ENCODE measurements at regions of chr22 and their contacts with region 1.

Region 1: DNA sequence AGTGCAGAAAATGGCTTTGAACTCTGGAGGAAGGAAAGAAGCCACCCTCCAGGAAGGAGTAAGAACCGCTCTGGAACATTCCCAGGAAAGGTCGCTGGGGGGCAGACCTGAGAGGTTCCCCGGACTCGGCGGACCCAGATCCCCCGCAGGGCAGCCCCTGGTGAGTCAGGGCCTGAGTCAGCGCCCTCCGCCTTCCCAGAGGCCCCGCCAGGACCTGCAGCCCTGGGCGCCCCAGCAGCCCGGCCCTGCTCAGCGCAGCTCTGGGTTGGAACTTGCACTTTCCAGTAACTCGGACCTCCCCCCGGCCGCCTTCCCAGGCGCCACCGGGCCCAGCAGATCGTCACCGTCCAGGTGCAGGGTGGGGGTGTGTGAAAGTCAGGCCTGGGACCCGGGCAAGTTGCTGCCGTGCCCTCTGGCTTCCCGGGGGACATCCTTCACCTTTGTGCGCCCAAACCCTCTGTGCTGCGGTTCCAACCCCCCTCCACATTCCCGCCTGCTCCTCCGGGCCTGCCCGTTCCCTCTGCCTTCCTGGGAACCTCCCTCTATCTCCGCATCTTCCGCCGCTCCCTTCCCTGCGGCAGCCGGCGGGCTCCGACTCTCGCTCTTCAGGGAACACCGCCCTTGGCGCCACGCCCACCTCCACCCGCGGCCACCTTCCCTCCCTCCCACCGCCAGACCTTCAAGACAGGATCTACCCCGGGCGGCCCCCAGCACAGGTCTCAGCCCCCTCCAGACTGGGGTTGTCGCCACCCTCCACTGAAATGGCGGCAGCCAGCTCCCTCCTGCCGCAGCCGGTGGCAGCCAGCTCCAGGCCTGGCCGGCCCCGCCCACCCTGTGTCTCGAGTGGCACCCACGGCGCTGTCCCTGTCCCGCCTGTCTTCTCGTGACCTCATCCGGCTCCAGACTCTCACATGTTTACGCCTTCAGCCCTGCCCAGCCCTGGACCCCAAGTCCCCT is 36.8 kb upstream of the WNT7B start:
- DNase-seq: peak; percentile 90
- ATAC-seq: peak; percentile 96
- H3K4me3 ChIP-seq: peak overlapping the region; percentile 71 to 86 (median 77); a peak in 5 of 6 replicates
- H3K27ac ChIP-seq: peak overlapping the region; percentile 71
- H3K4me1 ChIP-seq: peaks cover 41% of the 10 kb centered on the region
- H3K27me3 ChIP-seq: peaks cover 0 to 3% of the 10 kb centered on the region in 2 experiments; a peak in 1 of 5 replicates
- CTCF ChIP-seq: peak; percentile 83
- EP300 ChIP-seq: no peak
- POLR2A ChIP-seq: peak; percentile 67 to 80
- RAD21 ChIP-seq: peak; percentile 86

Region 2: DNA sequence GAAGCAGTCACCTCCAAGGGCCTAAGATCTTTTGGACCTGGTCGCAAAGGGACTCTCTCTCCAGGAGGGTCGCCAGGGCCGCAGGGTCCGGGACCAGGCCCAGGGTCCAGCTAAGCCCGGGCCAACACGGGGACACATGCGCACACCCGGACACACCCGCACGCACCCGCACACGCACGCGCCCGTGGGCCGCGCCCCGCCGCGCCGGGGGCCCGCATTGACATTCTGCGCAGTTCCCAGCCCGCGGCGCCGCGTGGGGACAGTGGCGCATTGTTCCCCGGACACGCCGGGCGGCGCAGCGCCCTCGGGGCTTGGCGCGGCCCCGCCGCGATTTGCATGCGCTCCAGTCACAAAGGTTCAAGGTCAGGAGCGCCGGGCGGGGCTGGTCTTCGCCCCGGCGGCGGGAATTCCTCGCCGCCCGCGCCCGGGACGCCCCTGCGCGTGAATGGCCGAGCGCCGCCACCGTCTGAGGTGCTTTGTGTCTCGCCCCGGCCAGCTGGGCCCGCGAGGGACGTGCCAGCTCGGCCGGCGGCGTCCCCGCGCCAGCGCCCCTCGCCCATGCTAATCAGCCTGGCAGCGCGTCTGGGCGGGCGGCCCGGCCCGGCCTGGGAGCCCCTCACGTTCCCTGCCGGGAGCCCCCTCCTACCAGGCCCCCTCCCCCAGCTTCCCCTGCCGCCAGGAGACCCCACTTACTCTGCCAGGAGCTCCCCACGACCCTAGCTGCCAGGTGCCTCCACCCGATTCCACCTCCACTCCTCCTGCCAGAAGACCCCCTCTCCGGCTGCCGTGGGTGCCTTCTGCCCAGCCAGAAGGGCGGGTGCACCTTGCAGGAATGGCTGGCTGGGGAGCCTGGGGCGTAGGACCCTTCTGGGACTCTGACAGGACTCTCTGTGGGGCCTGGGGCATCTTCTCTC is 13.7 kb after region 1 on chr22:
- CTCF ChIA-PET with region 1: no interaction called
- POLR2A ChIA-PET with region 1: interaction called, 13 read pairs
- in situ Hi-C with region 1: no loop called
- intact Hi-C with region 1: no loop called
- DNase-seq: peak; percentile 46
- ATAC-seq: peak; percentile 70
- H3K4me3 ChIP-seq: peak overlapping the region; percentile 41 to 71 (median 43)
- H3K27ac ChIP-seq: no peak overlapping the region
- H3K4me1 ChIP-seq: peaks cover 52% of the 10 kb centered on the region
- H3K27me3 ChIP-seq: peaks cover 7 to 54% of the 10 kb centered on the region in 2 experiments
- CTCF ChIP-seq: peak; percentile 49; the same call in 1 of the 2 replicates
- EP300 ChIP-seq: peak; percentile 34 to 42; a peak in 1 of 4 replicates
- POLR2A ChIP-seq: no peak
- RAD21 ChIP-seq: peak; percentile 68

Region 3: DNA sequence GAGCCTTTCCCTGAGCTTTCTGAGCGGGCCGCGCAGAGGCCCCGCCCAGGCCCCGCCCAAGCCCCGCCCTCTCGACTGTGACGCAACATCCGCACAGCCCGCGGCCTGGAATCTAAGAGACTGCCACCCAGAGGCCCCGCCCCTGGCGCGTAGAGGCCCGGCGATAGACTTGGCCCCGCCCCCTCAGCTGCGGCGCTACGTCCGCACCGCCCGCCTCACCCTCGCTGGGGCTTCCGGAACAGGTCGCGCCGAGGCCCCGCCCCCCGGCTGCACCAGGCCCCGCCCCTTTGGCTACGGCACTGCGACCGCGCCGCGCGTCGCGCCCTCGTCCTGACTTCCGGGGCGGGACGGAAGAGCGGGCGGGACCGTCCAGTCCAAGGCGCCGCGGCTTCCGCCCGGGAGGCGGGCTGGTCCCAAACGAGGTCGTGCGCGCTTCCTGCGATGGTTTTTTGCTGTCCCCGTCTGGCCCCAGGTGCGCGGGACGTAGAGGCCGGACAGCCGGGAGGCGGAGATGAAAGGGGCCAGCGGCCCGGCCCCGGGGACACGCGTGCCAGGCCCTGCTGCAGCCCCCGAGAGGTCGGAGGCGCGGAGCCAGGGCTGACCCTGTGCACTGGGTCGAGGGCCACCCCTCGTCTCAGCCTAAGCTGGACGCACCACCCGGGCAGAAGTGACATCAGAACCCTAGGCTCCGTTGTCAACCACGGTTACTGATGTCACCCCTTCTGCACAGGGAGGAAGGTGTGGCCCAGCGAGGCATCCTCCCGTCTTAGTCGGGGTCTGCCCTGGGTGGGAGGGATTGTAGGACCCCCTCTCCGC is 22.2 kb after region 1 on chr22:
- CTCF ChIA-PET with region 1: interaction called, 7 read pairs
- POLR2A ChIA-PET with region 1: interaction called, 41 read pairs
- in situ Hi-C with region 1: no loop called
- intact Hi-C with region 1: no loop called
- DNase-seq: peak; percentile 95
- ATAC-seq: peak; percentile 93
- H3K4me3 ChIP-seq: peak overlapping the region; percentile 64 to 85 (median 69)
- H3K27ac ChIP-seq: peak overlapping the region; percentile 69
- H3K4me1 ChIP-seq: peaks cover 39% of the 10 kb centered on the region
- H3K27me3 ChIP-seq: peaks cover 3 to 12% of the 10 kb centered on the region in 2 experiments; a peak in 3 of 5 replicates
- CTCF ChIP-seq: no peak
- EP300 ChIP-seq: peak in 1 of 2 experiments; percentile 7; a peak in 1 of 4 replicates
- POLR2A ChIP-seq: peak; percentile 71 to 86
- RAD21 ChIP-seq: no peak

Region 4: DNA sequence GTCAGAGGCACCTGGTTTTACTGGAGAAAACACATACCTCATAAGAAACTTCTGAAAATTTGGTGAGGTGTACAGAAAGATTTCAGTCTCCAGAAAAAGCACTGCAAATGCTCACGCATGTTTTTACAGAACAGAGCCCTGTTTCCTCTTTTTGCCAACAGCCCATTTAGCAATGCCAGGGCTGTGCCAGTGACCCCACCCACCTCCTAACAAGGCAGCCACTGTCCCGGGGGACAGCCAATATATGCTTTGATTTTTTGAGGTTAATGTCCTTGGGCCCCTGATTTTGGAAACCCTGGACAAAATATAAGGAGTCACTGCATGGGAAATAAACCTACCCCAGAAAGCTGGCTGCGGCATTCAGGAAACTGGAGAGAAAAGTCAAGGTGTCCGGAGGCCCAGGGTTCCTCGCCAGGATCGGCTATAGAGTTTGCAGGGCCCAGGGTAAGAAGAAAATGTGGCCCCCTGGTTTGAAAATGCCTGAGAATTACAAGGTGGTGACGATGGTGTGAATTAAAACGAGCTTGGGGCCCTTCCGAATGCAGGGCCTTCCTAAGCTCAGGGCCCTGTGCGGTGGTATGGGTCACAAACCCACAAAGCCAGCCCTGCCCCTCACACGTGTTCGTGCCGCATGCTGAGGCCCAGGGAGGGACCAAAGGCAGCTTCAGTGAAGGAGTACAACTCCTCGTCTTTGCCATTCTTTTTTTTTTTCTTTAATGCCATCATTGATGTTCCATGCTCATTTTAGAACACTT is 34.3 kb after region 1 on chr22:
- CTCF ChIA-PET with region 1: no interaction called
- POLR2A ChIA-PET with region 1: no interaction called
- in situ Hi-C with region 1: no loop called
- intact Hi-C with region 1: no loop called
- DNase-seq: no peak
- ATAC-seq: no peak
- H3K4me3 ChIP-seq: no peak overlapping the region
- H3K27ac ChIP-seq: no peak overlapping the region
- H3K4me1 ChIP-seq: peaks cover 11% of the 10 kb centered on the region
- H3K27me3 ChIP-seq: peaks cover 31 to 89% of the 10 kb centered on the region in 2 experiments
- CTCF ChIP-seq: no peak
- EP300 ChIP-seq: no peak
- POLR2A ChIP-seq: no peak
- RAD21 ChIP-seq: no peak

Region 5: DNA sequence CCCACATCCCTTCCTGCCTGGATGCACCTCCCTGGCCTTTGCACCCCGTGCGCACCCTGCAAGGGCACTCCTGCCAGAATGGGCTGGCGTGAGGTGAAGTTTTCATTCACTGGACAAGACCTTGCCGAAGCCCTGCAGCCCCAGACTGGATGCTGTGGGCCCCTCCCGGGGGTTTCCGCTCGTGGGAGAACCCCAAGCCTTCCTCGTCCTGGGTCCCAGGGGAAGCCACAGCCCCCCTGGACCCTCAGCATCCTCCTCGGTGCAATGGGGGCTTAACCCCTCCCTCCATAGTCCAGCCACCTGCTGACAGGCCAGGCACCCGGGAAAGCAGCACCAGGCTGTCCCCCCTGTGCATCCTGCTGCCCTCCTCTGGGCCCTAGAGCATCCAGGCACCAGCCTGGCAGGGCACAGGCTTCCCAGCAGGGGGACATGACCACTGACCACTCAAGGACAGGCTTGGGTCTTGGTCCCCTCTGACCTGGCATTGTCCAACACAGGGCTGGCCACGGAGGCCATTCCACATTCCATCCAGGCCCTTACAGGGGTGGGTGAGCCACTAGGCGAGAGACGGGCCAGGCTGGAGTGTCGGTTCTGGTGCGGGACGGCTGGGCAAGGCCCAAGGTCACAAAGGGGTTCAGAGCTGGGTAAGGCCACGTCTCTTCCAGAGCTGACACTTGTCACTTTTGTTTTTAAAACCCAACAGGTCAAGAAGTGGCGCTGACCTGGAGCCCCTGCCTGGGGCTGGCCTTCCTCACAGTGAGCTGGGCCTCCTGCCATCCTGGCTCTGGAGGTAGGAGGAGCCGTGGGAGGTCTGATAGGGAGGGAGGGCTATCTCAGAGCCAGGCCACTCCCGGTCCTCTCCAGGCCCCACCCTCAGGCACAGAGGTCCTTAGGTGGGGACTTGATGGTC is 95.1 kb after region 1 on chr22:
- CTCF ChIA-PET with region 1: no interaction called
- POLR2A ChIA-PET with region 1: interaction called, 12 read pairs
- in situ Hi-C with region 1: loop called (anchors 5 kb)
- intact Hi-C with region 1: no loop called
- DNase-seq: peak; percentile 42
- ATAC-seq: peak; percentile 56
- H3K4me3 ChIP-seq: peak overlapping the region in 1 of 3 experiments; percentile 29; a peak in 1 of 6 replicates
- H3K27ac ChIP-seq: no peak overlapping the region
- H3K4me1 ChIP-seq: peaks cover 55% of the 10 kb centered on the region
- H3K27me3 ChIP-seq: no peaks in the 10 kb centered on the region; a peak in 1 of 5 replicates
- CTCF ChIP-seq: 0 out of 2 replicates have a peak, but pooled peaks have one; percentile 9
- EP300 ChIP-seq: no peak
- POLR2A ChIP-seq: no peak
- RAD21 ChIP-seq: 0 out of 2 replicates have a peak, but pooled peaks have one; percentile 18

Region 6: GRCh38 chr22:46116491-46116958 is 102.8 kb after region 1 on chr22:
- CTCF ChIA-PET with region 1: interaction called, 33 read pairs
- POLR2A ChIA-PET with region 1: interaction called, 3 read pairs
- in situ Hi-C with region 1: no loop called
- intact Hi-C with region 1: no loop called
- DNase-seq: peak; percentile 74
- ATAC-seq: peak; percentile 81
- H3K4me3 ChIP-seq: no peak overlapping the region
- H3K27ac ChIP-seq: no peak overlapping the region
- H3K4me1 ChIP-seq: peaks cover 26% of the 10 kb centered on the region
- H3K27me3 ChIP-seq: peaks cover 2 to 46% of the 10 kb centered on the region in 2 experiments; a peak in 3 of 5 replicates
- CTCF ChIP-seq: peak; percentile 99
- EP300 ChIP-seq: no peak
- POLR2A ChIP-seq: no peak
- RAD21 ChIP-seq: peak; percentile 98

Region 7: DNA sequence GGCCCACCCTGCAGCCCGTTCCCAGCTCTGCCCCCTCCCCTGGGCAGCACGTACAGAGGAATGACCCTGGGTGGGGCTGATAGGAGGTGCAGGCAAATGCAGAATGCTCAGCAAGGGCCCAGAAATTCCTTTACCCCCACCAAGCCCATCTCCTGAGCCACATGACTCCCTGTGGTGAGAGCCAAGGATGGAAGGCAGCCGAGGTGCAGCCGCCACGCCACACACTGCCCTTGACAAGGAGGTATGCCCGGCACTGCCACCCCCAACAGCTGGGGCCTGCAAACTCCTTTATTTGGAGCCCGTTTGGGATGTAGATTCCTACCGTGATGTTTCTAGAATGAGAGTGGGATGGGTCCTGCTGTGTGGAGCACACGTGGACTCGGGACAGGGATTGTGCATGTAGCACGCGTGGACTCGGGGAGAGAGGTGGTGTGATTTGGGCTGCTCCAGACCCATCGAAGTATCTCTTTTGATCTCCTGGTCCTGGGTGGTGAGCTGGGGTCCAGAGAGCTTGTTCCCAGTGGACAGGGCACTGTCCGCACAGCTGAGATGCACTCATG is 295.9 kb after region 1 on chr22:
- CTCF ChIA-PET with region 1: no interaction called
- POLR2A ChIA-PET with region 1: no interaction called
- in situ Hi-C with region 1: loop called (anchors 10 kb)
- intact Hi-C with region 1: no loop called
- DNase-seq: no peak
- ATAC-seq: no peak
- H3K4me3 ChIP-seq: no peak overlapping the region
- H3K27ac ChIP-seq: no peak overlapping the region
- H3K4me1 ChIP-seq: no peaks in the 10 kb centered on the region
- H3K27me3 ChIP-seq: no peaks in the 10 kb centered on the region
- CTCF ChIP-seq: no peak
- EP300 ChIP-seq: no peak
- POLR2A ChIP-seq: no peak
- RAD21 ChIP-seq: no peak

Measured in HepG2 (cell line).